Mammary epithelial cell (primary cell): ENCODE measurements at regions of chr4 and their contacts with region 1.

Region 1: GRCh38 chr4:75895744-75896314 is 6.4 kb downstream of the PPEF2 start:
- DNase-seq: peak; percentile 11
- H3K4me3 ChIP-seq: no peak overlapping the region
- H3K27ac ChIP-seq: no peak overlapping the region
- H3K4me1 ChIP-seq: no peaks in the 10 kb centered on the region
- H3K27me3 ChIP-seq: no peaks in the 10 kb centered on the region
- CTCF ChIP-seq: peak; percentile 46 to 62

Region 2: GRCh38 chr4:73897380-73898136 is 1998.3 kb before region 1 on chr4:
- CTCF ChIA-PET with region 1: no interaction called
- dilution Hi-C with region 1: no loop called
- in situ Hi-C with region 1: no loop called
- intact Hi-C with region 1: no loop called
- DNase-seq: peak; percentile 71
- H3K4me3 ChIP-seq: no peak overlapping the region
- H3K27ac ChIP-seq: no peak overlapping the region
- H3K4me1 ChIP-seq: peaks cover 19% of the 10 kb centered on the region
- H3K27me3 ChIP-seq: no peaks in the 10 kb centered on the region
- CTCF ChIP-seq: no peak

Region 3: DNA sequence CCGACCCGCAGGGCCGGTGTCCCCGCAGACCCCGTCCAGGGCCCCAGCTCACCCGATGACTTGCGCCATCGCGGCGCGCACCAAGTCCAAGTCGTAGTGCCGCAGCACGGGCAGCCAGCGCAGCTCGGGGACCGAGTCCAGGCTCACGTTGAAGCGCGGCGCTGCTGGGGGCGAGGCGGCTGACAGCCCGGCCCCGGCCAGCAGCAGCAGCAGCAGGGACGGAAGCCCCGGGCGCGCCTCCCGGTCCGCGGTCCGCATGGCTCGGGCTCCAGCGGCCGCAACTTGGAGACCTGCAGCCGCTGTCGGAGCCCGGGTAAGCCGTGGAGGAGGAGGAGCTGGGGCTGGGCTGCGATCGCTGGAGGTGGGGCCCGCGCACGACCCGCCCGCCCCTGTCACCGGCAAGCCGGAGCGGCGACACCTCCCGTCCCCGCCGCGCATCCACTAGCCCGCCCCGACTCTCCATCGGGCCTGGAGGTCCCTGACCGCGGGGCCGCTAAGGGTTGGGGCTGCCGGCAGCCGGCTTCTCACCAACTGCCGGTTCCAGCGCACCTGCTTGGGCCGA is 44.9 kb after region 1 on chr4 and contains the start of gene NAAA:
- CTCF ChIA-PET with region 1: interaction called, 4 read pairs
- dilution Hi-C with region 1: no loop called
- in situ Hi-C with region 1: no loop called
- intact Hi-C with region 1: loop called (anchors 1 kb)
- DNase-seq: peak; percentile 53
- H3K4me3 ChIP-seq: peak within 1 kb of the TSS; percentile 61 to 73 (median 71)
- H3K27ac ChIP-seq: peak within 1 kb of the TSS; percentile 15
- H3K4me1 ChIP-seq: peaks cover 7% of the 10 kb centered on the region
- H3K27me3 ChIP-seq: no peaks in the 10 kb centered on the region
- CTCF ChIP-seq: no peak
- total RNA-seq, gene NAAA: 16.1 to 21.3 TPM

Region 4: GRCh38 chr4:76067652-76068286 is 171.9 kb after region 1 on chr4:
- CTCF ChIA-PET with region 1: no interaction called
- dilution Hi-C with region 1: no loop called
- in situ Hi-C with region 1: no loop called
- intact Hi-C with region 1: loop called (anchors 5 kb)
- DNase-seq: peak; percentile 55
- H3K4me3 ChIP-seq: no peak overlapping the region
- H3K27ac ChIP-seq: no peak overlapping the region
- H3K4me1 ChIP-seq: peaks cover 4% of the 10 kb centered on the region
- H3K27me3 ChIP-seq: no peaks in the 10 kb centered on the region
- CTCF ChIP-seq: peak; percentile 78 to 87

Region 5: DNA sequence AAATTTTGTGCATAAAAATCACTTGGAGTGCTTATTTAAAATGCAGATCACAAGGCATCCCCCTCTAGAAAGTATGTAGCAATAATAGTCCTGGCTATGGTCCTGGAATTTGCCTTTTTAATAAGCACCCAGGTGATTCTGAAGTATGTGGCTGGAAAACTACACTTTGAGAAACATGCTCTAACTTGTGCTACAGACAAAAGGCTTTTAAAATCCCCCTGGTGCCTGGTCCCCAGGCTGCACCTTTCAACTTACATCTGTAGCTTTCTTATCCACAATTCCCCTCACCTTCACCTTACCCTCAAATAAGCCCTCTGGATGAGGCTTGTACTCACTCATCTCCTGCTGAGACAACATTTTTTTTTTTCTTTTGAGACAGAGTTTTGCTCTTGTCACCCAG is 199.7 kb after region 1 on chr4:
- CTCF ChIA-PET with region 1: no interaction called
- dilution Hi-C with region 1: no loop called
- in situ Hi-C with region 1: no loop called
- intact Hi-C with region 1: loop called (anchors 5 kb)
- DNase-seq: peak; percentile 68
- H3K4me3 ChIP-seq: no peak overlapping the region
- H3K27ac ChIP-seq: no peak overlapping the region
- H3K4me1 ChIP-seq: peaks cover 14% of the 10 kb centered on the region
- H3K27me3 ChIP-seq: no peaks in the 10 kb centered on the region
- CTCF ChIP-seq: peak in 1 of 2 donors; percentile 4

Region 6: DNA sequence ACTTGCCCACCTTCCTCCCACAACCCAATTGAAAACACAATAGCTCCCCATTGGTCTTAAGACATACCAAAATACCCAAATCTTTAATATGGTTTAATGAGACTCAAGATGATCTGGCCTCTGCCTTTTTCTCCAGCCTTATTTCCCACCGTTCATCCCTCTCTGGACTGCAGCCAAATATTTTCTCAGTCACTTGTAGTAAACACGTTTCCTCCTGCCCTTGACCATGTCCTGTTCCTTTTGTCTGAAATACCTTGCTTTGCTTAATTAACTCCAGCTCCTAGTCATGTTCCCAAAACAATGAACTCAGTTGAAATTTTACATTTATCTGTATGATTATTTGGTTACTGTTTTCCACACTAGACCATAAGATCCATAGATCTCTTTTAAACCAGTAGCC is 260.8 kb after region 1 on chr4:
- CTCF ChIA-PET with region 1: no interaction called
- dilution Hi-C with region 1: no loop called
- in situ Hi-C with region 1: no loop called
- intact Hi-C with region 1: no loop called
- DNase-seq: peak; percentile 8
- H3K4me3 ChIP-seq: no peak overlapping the region
- H3K27ac ChIP-seq: no peak overlapping the region
- H3K4me1 ChIP-seq: no peaks in the 10 kb centered on the region
- H3K27me3 ChIP-seq: no peaks in the 10 kb centered on the region
- CTCF ChIP-seq: no peak